ENCODE measurements at regions of chr10 and their contacts with region 1.

Region 1: DNA sequence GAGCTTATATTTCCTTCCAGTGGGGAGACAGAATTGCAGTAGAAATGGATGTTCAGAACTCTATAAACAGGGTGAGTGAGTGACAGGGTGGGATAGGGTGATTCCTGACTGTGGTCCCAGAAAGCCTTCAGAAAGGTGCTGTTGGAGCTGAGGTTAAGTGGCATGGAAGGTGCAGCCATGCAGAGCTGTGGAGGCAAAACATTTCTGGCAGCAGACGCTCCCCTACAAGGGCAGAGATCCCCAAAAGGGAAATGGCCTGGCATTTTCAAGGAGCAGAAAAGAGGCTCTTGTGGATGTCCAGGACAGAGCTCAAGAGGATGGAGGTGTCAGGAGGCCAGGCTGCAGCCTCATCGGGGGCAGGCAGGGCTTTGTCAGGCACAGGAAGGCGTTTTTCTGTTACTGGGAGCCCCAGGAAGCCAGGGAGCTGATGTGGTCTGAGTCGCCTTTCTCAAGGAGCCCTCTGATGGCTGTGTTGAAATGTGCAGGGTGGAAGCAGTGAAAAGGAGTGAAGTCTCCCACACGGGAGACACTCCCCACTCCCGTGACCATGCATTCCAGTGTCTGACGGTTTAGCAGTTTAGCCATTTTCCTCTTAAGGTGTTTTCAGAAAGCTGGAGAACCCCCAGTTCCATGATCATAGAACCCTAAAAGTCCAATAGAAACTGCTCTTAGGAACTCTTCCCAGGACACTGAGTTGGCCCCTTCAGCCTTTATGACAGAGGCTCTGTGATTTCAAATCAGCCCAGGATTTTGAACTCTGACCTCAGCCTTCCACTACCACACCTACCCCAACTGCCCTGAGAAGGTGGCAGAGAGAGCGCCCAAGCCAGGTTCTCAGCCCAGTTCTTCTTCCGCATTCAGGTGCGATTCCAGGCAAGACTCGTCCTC is 96.2 kb downstream of the C10orf105 start:
- DNase-seq: peak; percentile 45
- ATAC-seq: peak; percentile 40
- H3K4me3 Mint-ChIP-seq: peak overlapping the region; percentile 58
- H3K27ac Mint-ChIP-seq: peak overlapping the region; percentile 67
- H3K4me1 Mint-ChIP-seq: peaks cover 71% of the 10 kb centered on the region
- H3K27me3 Mint-ChIP-seq: peaks cover 1% of the 10 kb centered on the region
- CTCF ChIP-seq: no peak

Region 2: GRCh38 chr10:71217266-71218045 is 405.9 kb before region 1 on chr10:
- CTCF ChIA-PET with region 1: no interaction called
- POLR2A ChIA-PET with region 1: no interaction called
- DNase-seq: peak; percentile 70
- ATAC-seq: peak; percentile 36
- H3K4me3 Mint-ChIP-seq: peak overlapping the region; percentile 71
- H3K27ac Mint-ChIP-seq: peak overlapping the region; percentile 80; the same call in 1 of the 2 replicates
- H3K4me1 Mint-ChIP-seq: peaks cover 67% of the 10 kb centered on the region
- H3K27me3 Mint-ChIP-seq: peaks cover 17% of the 10 kb centered on the region
- CTCF ChIP-seq: no peak

Region 3: GRCh38 chr10:71608819-71609768 is 14.2 kb before region 1 on chr10:
- CTCF ChIA-PET with region 1: interaction called, 55 read pairs
- POLR2A ChIA-PET with region 1: interaction called, 3 read pairs
- DNase-seq: peak; percentile 93
- ATAC-seq: peak; percentile 75
- H3K4me3 Mint-ChIP-seq: no peak overlapping the region
- H3K27ac Mint-ChIP-seq: no peak overlapping the region
- H3K4me1 Mint-ChIP-seq: peaks cover 53% of the 10 kb centered on the region
- H3K27me3 Mint-ChIP-seq: no peaks in the 10 kb centered on the region
- CTCF ChIP-seq: peak; percentile 67

Region 4: DNA sequence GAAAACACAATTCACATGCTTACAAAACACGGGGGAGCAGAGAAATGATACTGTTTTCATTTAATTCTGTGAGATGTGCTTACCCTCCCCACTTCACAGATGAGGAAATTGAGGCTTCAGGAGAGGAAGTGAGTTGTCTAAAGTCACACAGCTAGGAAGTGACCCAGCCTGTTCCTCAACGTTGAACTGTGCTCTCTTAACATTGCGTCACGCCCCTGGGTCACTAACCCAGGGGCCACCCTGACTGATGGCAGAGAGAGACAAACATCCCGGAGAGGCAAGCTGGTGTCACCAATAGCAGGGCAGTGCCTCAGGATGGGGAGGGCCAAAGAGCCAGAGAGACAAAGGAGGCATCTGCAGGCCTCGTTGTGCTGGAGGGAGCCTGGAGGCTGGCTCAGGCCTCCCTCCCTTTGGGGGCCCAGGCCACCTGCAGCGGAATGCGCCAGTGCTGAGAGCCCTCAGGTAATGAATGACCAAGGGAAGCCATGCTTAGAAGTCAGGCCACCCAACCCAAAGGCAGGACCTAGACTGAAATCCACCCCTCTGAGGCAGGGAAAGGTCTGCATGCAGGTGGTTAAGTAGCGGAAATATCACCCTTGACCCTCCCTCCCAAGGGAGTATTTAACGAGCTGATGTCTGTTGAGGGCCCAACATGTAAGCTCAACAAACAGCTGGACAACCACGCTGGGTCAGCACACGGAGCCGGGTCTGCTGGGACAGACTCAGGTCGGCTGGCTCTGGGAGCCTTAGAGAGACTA is 14.9 kb after region 1 on chr10:
- CTCF ChIA-PET with region 1: interaction called, 31 read pairs
- POLR2A ChIA-PET with region 1: no interaction called
- DNase-seq: no peak
- ATAC-seq: peak; percentile 23
- H3K4me3 Mint-ChIP-seq: no peak overlapping the region
- H3K27ac Mint-ChIP-seq: no peak overlapping the region; the same call in 1 of the 2 replicates
- H3K4me1 Mint-ChIP-seq: peaks cover 66% of the 10 kb centered on the region
- H3K27me3 Mint-ChIP-seq: peaks cover 46% of the 10 kb centered on the region
- CTCF ChIP-seq: no peak

Region 5: GRCh38 chr10:71659111-71659634 is 35.8 kb after region 1 on chr10:
- CTCF ChIA-PET with region 1: interaction called, 18 read pairs
- POLR2A ChIA-PET with region 1: interaction called, 3 read pairs
- DNase-seq: no peak
- ATAC-seq: peak; percentile 4; the same call in 1 of the 2 replicates
- H3K4me3 Mint-ChIP-seq: no peak overlapping the region
- H3K27ac Mint-ChIP-seq: no peak overlapping the region
- H3K4me1 Mint-ChIP-seq: peaks cover 80% of the 10 kb centered on the region
- H3K27me3 Mint-ChIP-seq: peaks cover 64% of the 10 kb centered on the region
- CTCF ChIP-seq: no peak

Measured in WTC11 (cell line).